AG04449 (cell line): ENCODE measurements at regions of chr7 and their contacts with region 1.

Region 1: DNA sequence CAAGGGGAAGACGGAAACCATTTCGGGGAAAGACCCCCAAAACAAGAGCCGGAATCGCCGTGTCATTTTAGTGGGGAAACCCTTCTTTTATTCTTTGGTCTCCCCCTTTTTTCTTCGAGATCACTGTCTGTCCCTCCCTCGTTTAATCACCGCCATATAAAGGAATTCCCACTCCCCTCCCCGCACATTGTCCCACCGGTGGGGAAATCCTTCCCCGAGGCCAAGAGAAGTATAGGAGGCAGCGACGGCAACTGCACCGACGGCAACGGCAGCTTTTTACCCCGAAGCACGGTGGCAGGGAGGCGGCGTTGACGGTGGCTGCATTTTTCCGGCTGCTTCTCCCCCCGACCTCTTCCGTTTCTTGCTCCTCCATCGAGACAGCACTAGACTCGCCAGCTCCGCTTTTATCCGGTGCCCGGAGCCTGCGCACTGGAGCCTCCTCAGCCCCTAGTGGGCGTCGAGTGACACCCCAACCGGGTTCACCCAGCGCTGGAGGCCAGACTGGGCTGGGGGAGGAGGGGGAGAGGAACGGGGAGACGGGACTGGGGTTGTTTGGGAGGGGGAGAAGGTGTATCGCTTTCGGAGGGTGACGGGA is 687 bp upstream of the KMT2E start:
- DNase-seq: peak; percentile 72
- H3K4me3 ChIP-seq: peak overlapping the region; percentile 97
- CTCF ChIP-seq: peak; percentile 67

Region 2: DNA sequence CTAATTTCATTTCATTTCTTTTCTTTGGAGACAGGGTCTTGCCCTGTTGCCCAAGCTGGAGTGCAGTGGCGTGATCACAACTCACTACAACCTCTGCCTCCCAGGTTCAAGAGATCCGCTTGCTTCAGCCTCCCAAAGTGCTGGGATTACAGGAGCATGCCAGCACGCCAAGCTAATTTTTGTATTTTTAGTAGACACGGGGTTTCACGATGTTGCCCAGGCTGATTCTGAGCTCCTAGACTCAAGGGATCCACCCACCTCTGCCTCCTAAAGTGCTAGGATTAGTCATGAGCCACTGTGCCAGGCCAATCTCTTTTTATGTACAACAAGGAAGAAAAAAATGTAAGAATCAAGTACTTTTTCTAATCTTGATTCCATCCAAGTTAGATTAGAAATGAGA is 10.0 kb before region 1 on chr7:
- CTCF ChIA-PET with region 1: interaction called, 7 read pairs
- POLR2A ChIA-PET with region 1: interaction called, 11 read pairs
- DNase-seq: no peak
- H3K4me3 ChIP-seq: peak overlapping the region; percentile 15; the same call in 1 of the 2 replicates
- CTCF ChIP-seq: no peak